ENCODE measurements at regions of chr16 and their contacts with region 1.

Region 1: GRCh38 chr16:30984669-30985400 is at the start of gene HSD3B7:
- DNase-seq: peak; percentile 50 to 75 (median 66)
- H3K4me3 ChIP-seq: peak within 1 kb of the TSS in 3 of 7 experiments; percentile 54 to 78 (median 65)
- H3K27ac ChIP-seq: no peak within 1 kb of the TSS
- H3K4me1 ChIP-seq: peaks cover 0 to 21% (median 11%) of the 10 kb centered on the region in 4 experiments
- H3K27me3 ChIP-seq: no peaks in the 10 kb centered on the region

Region 2: DNA sequence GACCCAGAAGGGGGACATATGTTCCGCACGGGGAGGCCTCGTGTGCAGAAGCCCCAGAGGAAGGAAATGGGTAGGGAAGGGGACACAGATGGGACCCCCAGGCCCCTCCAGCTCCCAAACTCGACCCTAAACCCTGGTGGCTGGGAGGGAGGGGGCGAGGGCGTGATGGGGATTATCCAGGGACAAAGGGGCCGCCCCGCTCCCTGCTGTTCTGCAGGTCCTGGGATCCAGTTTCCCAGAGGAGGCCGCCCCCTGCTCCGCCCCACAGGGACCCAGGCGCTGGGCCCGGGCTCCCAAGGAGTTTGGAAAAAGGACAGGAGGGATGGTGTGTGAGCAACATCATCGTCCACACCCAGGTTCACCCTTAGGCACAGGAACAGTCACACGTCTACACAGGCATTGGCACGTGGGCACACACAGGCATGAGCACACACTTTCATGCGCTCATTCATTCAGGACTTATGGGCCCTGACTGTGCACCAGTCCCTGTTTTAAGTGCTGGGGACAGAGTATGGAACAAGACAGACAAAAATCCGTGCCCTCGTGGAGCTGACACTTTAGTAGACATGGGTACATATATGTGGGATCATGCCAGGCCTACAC is 74.3 kb before region 1 on chr16:
- CTCF ChIA-PET with region 1: no interaction called
- POLR2A ChIA-PET with region 1: no interaction called
- DNase-seq: no peak
- H3K4me3 ChIP-seq: peak overlapping the region in 1 of 7 experiments; percentile 23
- H3K27ac ChIP-seq: no peak overlapping the region
- H3K4me1 ChIP-seq: peaks cover 0 to 29% (median 16%) of the 10 kb centered on the region in 4 experiments
- H3K27me3 ChIP-seq: no peaks in the 10 kb centered on the region

Region 3: GRCh38 chr16:30922960-30923535 is 61.8 kb before region 1 on chr16:
- CTCF ChIA-PET with region 1: no interaction called
- POLR2A ChIA-PET with region 1: no interaction called
- DNase-seq: peak; percentile 99
- H3K4me3 ChIP-seq: peak overlapping the region; percentile 82 to 100 (median 93)
- H3K27ac ChIP-seq: peak overlapping the region; percentile 94 to 96
- H3K4me1 ChIP-seq: peaks cover 0 to 33% (median 31%) of the 10 kb centered on the region in 4 experiments
- H3K27me3 ChIP-seq: no peaks in the 10 kb centered on the region

Region 4: DNA sequence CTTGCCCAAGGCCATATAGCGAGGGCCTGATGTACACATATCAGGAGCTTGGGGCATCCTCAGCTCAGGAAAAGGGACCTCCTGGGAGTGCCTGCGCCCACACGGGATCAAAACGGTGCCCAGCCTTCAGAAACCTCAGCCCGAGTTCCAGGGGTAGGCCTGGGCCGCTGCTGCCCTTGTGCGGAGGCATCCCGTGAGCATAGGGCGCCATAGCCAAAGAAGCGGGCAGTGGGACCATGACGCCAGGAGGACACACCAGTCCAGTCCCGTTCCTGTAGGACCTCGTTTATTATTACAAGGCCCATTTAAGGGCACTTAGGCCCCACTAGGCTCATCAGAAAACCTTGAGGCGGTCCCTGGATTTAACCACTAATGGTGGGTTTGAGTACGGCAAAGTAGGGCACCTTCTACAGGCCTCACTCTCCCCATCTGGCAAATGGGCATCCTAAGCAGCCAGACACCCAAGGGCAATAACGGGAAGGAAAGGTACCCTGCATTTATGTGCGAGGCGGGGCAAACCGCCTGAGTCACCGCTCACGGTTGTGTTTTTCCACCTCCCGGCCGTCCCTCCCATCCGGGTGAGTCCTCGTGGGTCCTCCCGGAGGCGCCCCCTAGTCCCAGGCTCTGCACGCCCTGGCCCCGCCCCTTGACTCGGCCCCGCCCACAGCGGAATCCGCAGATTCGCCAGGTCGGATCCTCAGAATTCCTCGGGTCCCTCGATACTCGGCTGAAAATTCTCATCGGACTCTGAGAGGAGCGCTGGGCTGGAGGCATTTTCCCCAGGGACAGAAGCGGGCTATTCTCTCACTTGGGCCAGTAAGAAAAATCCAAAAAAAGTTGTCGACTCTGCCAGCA is 28.0 kb before region 1 on chr16:
- CTCF ChIA-PET with region 1: interaction called, 21 read pairs
- POLR2A ChIA-PET with region 1: no interaction called
- DNase-seq: peak; percentile 95 to 97 (median 97)
- H3K4me3 ChIP-seq: peak overlapping the region; percentile 73 to 99 (median 91)
- H3K27ac ChIP-seq: peak overlapping the region; percentile 99
- H3K4me1 ChIP-seq: peaks cover 0 to 36% (median 21%) of the 10 kb centered on the region in 4 experiments
- H3K27me3 ChIP-seq: no peaks in the 10 kb centered on the region

Region 5: DNA sequence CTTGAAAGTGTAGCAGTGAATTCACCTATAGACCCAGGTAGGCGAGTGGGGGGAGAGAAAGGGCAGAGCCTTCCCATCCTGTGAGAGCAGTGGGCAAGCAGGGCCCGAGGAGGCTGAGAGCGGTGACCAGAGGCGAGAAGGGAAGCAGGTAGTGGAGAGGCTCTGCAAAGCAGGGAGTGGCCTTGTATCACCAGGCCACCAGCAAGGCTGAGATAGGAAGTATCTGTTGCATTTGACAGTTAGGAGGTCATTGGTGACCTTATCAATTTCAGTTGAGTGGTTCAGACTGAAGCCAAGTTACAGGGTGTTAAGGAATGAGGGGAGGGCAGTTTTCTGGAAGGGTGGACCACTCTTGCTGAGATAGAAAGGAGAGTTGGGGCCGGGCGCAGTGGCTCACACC is 10.5 kb before region 1 on chr16:
- CTCF ChIA-PET with region 1: interaction called, 12 read pairs
- POLR2A ChIA-PET with region 1: interaction called, 3 read pairs
- DNase-seq: no peak
- H3K4me3 ChIP-seq: no peak overlapping the region
- H3K27ac ChIP-seq: no peak overlapping the region
- H3K4me1 ChIP-seq: no peaks in the 10 kb centered on the region
- H3K27me3 ChIP-seq: no peaks in the 10 kb centered on the region

Region 6: GRCh38 chr16:30997887-30998711 is 13.3 kb after region 1 on chr16:
- CTCF ChIA-PET with region 1: interaction called, 40 read pairs
- POLR2A ChIA-PET with region 1: no interaction called
- DNase-seq: no peak
- H3K4me3 ChIP-seq: peak overlapping the region in 2 of 7 experiments; percentile 66 to 69
- H3K27ac ChIP-seq: no peak overlapping the region
- H3K4me1 ChIP-seq: peaks cover 0 to 21% (median 16%) of the 10 kb centered on the region in 4 experiments
- H3K27me3 ChIP-seq: peaks cover 0 to 15% (median 0%) of the 10 kb centered on the region in 5 experiments

Region 7: GRCh38 chr16:31032736-31033708 is 48.2 kb after region 1 on chr16 and contains the start of gene STX4:
- CTCF ChIA-PET with region 1: interaction called, 11 read pairs
- POLR2A ChIA-PET with region 1: interaction called, 3 read pairs
- DNase-seq: peak; percentile 100
- H3K4me3 ChIP-seq: peak within 1 kb of the TSS; percentile 79 to 100 (median 94)
- H3K27ac ChIP-seq: peak within 1 kb of the TSS; percentile 96 to 97
- H3K4me1 ChIP-seq: peaks cover 3 to 26% (median 21%) of the 10 kb centered on the region in 4 experiments
- H3K27me3 ChIP-seq: no peaks in the 10 kb centered on the region

Region 8: DNA sequence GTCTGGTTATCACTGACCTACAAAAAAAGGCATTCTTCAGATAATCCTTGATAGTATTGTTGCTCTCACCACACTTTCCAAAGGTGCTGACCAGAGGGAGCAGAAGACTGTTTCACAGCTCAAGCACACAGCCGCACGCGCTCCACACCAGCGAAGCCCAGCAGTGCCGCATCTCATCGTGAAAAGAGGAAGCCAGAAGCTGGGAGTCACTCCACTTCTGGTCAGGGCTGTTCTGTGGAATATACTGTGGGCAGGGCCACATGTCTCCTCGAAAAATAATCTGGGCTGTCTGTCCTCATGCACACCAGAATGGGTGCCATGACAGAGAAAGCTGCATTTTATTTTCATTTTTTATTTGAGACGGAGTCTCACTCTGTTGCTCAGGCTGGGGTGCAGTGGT is 172.3 kb after region 1 on chr16:
- CTCF ChIA-PET with region 1: interaction called, 14 read pairs
- POLR2A ChIA-PET with region 1: no interaction called
- DNase-seq: peak in 2 of 3 donors; percentile 68 to 74
- H3K4me3 ChIP-seq: peak overlapping the region in 2 of 7 experiments; percentile 11 to 50
- H3K27ac ChIP-seq: no peak overlapping the region
- H3K4me1 ChIP-seq: peaks cover 0 to 11% (median 6%) of the 10 kb centered on the region in 4 experiments
- H3K27me3 ChIP-seq: peaks cover 0 to 1% (median 0%) of the 10 kb centered on the region in 5 experiments

Measured in common myeloid progenitor, CD34-positive (primary cell).